GM10248 (cell line): ENCODE measurements at regions of chr2 and their contacts with region 1.

Region 1: DNA sequence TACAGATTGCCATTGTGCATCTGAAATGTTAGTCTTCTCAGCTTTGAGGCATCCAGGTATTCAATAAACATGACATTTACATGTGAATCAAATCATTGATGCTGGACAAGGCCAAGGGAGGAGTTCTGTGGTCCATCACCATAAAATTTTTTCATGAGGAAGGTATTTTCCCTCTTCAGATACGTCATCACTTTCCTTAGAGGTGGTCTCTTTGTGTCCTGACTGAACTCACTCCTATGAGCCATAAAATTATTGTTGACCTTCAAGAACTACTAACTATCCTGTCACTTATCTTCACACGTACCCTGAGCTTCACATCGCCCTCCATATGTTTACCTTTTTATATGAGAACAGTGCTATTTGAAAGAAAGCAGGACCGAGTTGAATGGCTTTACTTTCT is 382.3 kb upstream of the FANCL start:
- DNase-seq: no peak
- CTCF ChIP-seq: no peak

Region 2: DNA sequence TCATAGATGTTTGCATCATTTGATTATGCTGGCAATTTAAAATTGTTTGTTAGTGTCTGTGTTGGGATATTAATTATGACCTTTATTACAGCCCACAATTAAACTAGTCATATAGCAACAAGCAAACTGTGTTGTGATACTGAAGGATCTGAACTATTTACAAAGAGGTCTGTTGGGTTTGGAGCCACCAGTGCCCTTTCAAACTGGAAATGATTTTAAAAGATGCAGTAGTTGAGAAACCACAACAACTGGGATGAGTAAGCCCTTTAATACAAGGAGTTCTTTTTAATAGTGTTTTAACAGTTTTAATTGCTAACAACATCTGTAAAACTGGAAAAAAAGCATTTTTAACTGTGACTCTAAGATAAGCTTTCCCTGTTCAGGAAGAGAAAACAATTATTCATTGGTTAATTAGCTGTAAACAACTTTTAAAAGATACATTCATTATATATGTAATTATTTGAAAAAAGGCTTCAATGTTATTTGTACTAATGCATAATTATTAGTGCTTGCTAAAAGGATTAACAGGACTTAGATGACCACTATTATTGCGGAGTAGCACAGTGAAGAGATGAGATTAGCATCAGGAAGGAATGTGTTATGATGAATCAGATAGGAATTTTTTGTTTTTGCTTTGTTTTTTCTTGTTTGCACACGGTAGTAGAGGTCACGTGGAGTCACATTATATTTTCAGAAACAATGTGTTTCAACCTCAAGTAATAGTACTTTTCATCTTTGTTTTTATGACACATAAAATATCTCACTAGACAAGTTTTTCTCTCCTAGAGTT is 10.4 kb after region 1 on chr2:
- CTCF ChIA-PET with region 1: interaction called, 14 read pairs
- POLR2A ChIA-PET with region 1: no interaction called
- DNase-seq: no peak
- CTCF ChIP-seq: no peak

Region 3: DNA sequence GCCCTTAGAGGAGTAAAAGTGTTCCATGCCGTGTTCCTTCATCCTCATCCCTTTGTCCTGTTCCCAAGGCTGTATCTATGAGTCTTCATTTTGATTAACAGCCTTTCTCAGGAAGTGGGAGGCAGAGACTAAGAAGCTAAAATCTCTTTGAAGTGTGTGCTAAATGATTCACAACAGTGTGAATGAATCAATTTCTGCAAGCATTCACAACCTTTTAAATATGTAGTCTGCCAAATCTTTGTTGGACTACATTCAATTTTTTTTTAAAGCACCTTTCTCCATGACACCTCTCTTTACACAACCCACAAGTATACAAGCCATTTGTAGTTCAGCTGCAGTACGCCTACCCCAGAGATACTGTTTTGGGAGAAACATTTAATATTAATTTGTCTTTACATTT is 26.3 kb after region 1 on chr2:
- CTCF ChIA-PET with region 1: no interaction called
- POLR2A ChIA-PET with region 1: no interaction called
- DNase-seq: no peak
- CTCF ChIP-seq: no peak